CD8-positive, alpha-beta T cell (primary cell): ENCODE measurements at regions of chr15 and their contacts with region 1.

Region 1: GRCh38 chr15:49235446-49236124 is 65.5 kb downstream of the GALK2 start:
- DNase-seq: peak; percentile 17 to 72 (median 35)
- ATAC-seq: peak; percentile 65
- H3K4me3 ChIP-seq: no peak overlapping the region
- H3K4me3 Mint-ChIP-seq: no peak overlapping the region
- H3K27ac ChIP-seq: peak overlapping the region in 1 of 2 experiments; percentile 4
- H3K27ac Mint-ChIP-seq: peak overlapping the region; percentile 33
- H3K4me1 ChIP-seq: no peaks in the 10 kb centered on the region
- H3K4me1 Mint-ChIP-seq: peaks cover 15% of the 10 kb centered on the region
- H3K27me3 ChIP-seq: no peaks in the 10 kb centered on the region
- H3K27me3 Mint-ChIP-seq: no peaks in the 10 kb centered on the region
- CTCF ChIP-seq: peak; percentile 64

Region 2: GRCh38 chr15:47975427-47975826 is 1260.2 kb before region 1 on chr15:
- CTCF ChIA-PET with region 1: no interaction called
- POLR2A ChIA-PET with region 1: no interaction called
- intact Hi-C with region 1: no loop called
- DNase-seq: no peak
- ATAC-seq: no peak
- H3K4me3 ChIP-seq: no peak overlapping the region
- H3K4me3 Mint-ChIP-seq: no peak overlapping the region
- H3K27ac ChIP-seq: no peak overlapping the region
- H3K27ac Mint-ChIP-seq: no peak overlapping the region
- H3K4me1 ChIP-seq: no peaks in the 10 kb centered on the region
- H3K4me1 Mint-ChIP-seq: no peaks in the 10 kb centered on the region
- H3K27me3 ChIP-seq: no peaks in the 10 kb centered on the region
- H3K27me3 Mint-ChIP-seq: no peaks in the 10 kb centered on the region
- CTCF ChIP-seq: no peak

Region 3: GRCh38 chr15:49199666-49200065 is 35.9 kb before region 1 on chr15:
- CTCF ChIA-PET with region 1: no interaction called
- POLR2A ChIA-PET with region 1: no interaction called
- intact Hi-C with region 1: loop called in 1 of 2 experiments (anchors 5 kb)
- DNase-seq: no peak
- ATAC-seq: no peak
- H3K4me3 ChIP-seq: no peak overlapping the region
- H3K4me3 Mint-ChIP-seq: no peak overlapping the region
- H3K27ac ChIP-seq: no peak overlapping the region
- H3K27ac Mint-ChIP-seq: no peak overlapping the region
- H3K4me1 ChIP-seq: no peaks in the 10 kb centered on the region
- H3K4me1 Mint-ChIP-seq: peaks cover 14% of the 10 kb centered on the region
- H3K27me3 ChIP-seq: no peaks in the 10 kb centered on the region
- H3K27me3 Mint-ChIP-seq: no peaks in the 10 kb centered on the region
- CTCF ChIP-seq: no peak

Region 4: GRCh38 chr15:49421991-49422390 is 186.4 kb after region 1 on chr15:
- CTCF ChIA-PET with region 1: interaction called, 35 read pairs
- POLR2A ChIA-PET with region 1: no interaction called
- intact Hi-C with region 1: loop called (anchors 1 kb)
- DNase-seq: peak in 7 of 9 experiments; percentile 8 to 69 (median 29)
- ATAC-seq: peak; percentile 44
- H3K4me3 ChIP-seq: no peak overlapping the region
- H3K4me3 Mint-ChIP-seq: peak overlapping the region; percentile 44
- H3K27ac ChIP-seq: no peak overlapping the region
- H3K27ac Mint-ChIP-seq: peak overlapping the region; percentile 62
- H3K4me1 ChIP-seq: no peaks in the 10 kb centered on the region
- H3K4me1 Mint-ChIP-seq: peaks cover 3% of the 10 kb centered on the region
- H3K27me3 ChIP-seq: no peaks in the 10 kb centered on the region
- H3K27me3 Mint-ChIP-seq: no peaks in the 10 kb centered on the region
- CTCF ChIP-seq: peak; percentile 80

Region 5: GRCh38 chr15:49606580-49606979 is 371.0 kb after region 1 on chr15:
- CTCF ChIA-PET with region 1: no interaction called
- POLR2A ChIA-PET with region 1: no interaction called
- intact Hi-C with region 1: no loop called
- DNase-seq: no peak
- ATAC-seq: no peak
- H3K4me3 ChIP-seq: no peak overlapping the region
- H3K4me3 Mint-ChIP-seq: no peak overlapping the region
- H3K27ac ChIP-seq: no peak overlapping the region
- H3K27ac Mint-ChIP-seq: no peak overlapping the region
- H3K4me1 ChIP-seq: no peaks in the 10 kb centered on the region
- H3K4me1 Mint-ChIP-seq: no peaks in the 10 kb centered on the region
- H3K27me3 ChIP-seq: no peaks in the 10 kb centered on the region
- H3K27me3 Mint-ChIP-seq: no peaks in the 10 kb centered on the region
- CTCF ChIP-seq: no peak

Region 6: GRCh38 chr15:50003786-50004334 is 768.3 kb after region 1 on chr15:
- CTCF ChIA-PET with region 1: interaction called, 3 read pairs
- POLR2A ChIA-PET with region 1: no interaction called
- intact Hi-C with region 1: loop called in 1 of 2 experiments (anchors 5 kb)
- DNase-seq: peak; percentile 16 to 82 (median 56)
- ATAC-seq: peak; percentile 64
- H3K4me3 ChIP-seq: no peak overlapping the region
- H3K4me3 Mint-ChIP-seq: no peak overlapping the region
- H3K27ac ChIP-seq: peak overlapping the region in 1 of 2 experiments; percentile 57
- H3K27ac Mint-ChIP-seq: no peak overlapping the region
- H3K4me1 ChIP-seq: no peaks in the 10 kb centered on the region
- H3K4me1 Mint-ChIP-seq: peaks cover 5% of the 10 kb centered on the region
- H3K27me3 ChIP-seq: no peaks in the 10 kb centered on the region
- H3K27me3 Mint-ChIP-seq: no peaks in the 10 kb centered on the region
- CTCF ChIP-seq: no peak

Region 7: GRCh38 chr15:50145451-50145872 is 909.9 kb after region 1 on chr15:
- CTCF ChIA-PET with region 1: interaction called, 6 read pairs
- POLR2A ChIA-PET with region 1: no interaction called
- intact Hi-C with region 1: loop called in 1 of 2 experiments (anchors 1 kb)
- DNase-seq: peak in 2 of 9 experiments; percentile 59 to 69
- ATAC-seq: no peak
- H3K4me3 ChIP-seq: no peak overlapping the region
- H3K4me3 Mint-ChIP-seq: no peak overlapping the region
- H3K27ac ChIP-seq: no peak overlapping the region
- H3K27ac Mint-ChIP-seq: no peak overlapping the region
- H3K4me1 ChIP-seq: no peaks in the 10 kb centered on the region
- H3K4me1 Mint-ChIP-seq: no peaks in the 10 kb centered on the region
- H3K27me3 ChIP-seq: no peaks in the 10 kb centered on the region
- H3K27me3 Mint-ChIP-seq: no peaks in the 10 kb centered on the region
- CTCF ChIP-seq: peak; percentile 73

Region 8: DNA sequence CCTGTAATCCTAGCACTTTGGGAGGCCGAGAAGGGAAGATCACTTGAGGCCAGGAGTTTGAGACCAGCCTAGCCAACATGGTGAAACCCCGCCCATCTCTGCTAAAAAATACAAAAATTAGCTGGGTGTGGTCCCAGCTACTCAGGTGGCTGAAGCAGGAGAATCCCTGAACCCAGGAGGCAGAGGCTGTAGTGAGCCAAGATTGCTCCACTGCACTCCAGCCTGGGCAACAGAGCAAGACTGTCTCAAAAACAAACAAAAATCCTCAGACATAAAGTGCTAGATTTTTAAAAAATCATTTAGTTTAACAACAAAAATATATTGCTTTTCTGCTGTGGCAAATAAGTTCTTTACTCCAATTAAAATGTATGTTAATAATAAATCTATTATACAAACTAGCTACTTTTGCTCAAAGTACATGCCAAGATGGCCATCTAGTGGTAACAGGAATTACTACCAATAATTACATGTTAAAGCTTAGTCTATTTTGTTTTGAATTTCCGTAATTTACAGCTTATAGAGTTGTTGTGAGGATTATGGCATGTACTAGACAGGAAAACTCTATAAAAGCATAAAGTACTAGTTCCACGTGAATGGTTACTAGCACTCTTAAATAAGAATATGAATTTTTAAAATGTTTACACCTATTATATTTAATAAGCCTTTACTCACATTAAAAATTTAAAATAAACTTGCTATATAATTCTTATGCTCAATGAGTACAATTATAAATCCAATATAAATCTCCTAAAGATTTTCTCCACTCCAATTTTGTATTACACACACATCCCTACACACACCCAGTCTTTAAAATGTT is 1080.4 kb after region 1 on chr15:
- CTCF ChIA-PET with region 1: interaction called, 4 read pairs
- POLR2A ChIA-PET with region 1: no interaction called
- intact Hi-C with region 1: loop called in 1 of 2 experiments (anchors 2 kb)
- DNase-seq: peak in 2 of 9 experiments; percentile 58 to 71
- ATAC-seq: peak; percentile 29
- H3K4me3 ChIP-seq: no peak overlapping the region
- H3K4me3 Mint-ChIP-seq: no peak overlapping the region
- H3K27ac ChIP-seq: no peak overlapping the region
- H3K27ac Mint-ChIP-seq: no peak overlapping the region
- H3K4me1 ChIP-seq: no peaks in the 10 kb centered on the region
- H3K4me1 Mint-ChIP-seq: peaks cover 19% of the 10 kb centered on the region
- H3K27me3 ChIP-seq: no peaks in the 10 kb centered on the region
- H3K27me3 Mint-ChIP-seq: no peaks in the 10 kb centered on the region
- CTCF ChIP-seq: peak; percentile 97